ENCODE measurements at regions of chr2 and their contacts with region 1.

Region 1: DNA sequence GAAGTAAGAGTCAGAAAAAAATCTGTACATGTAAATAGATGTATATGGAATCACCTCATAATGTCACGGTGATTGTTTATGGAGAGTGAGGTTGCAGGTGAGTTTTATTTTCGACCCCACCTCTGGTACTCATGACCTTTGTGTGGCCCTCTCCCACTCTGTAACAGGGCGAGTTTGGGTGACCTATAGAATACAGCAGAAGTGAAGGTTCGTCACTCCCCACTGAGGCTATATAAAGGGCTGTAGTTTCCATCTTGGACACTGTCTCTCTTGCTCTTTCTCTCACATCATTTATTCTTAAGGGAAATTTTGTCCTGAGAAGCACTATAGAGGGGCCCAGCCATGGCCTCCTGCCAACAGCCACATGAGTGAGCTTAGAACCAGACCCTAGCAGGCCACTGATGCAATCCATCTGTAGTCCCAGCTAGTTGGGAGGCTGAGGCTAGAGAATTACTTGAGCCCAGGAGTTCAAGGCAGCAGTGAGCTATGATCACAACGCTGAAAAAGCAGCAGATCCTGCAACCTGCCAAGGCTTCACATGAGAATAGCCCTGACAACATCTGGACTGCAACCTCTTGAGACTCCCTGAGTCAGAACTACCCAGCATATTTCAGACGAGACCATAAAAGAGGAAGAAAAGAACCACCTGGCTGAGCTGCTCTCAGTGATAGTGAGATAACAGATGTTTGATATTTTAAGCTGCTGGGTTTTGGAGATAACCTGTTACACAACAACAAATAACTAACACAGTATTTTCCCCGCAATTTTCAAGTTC is 74.3 kb upstream of the SLC1A4 start:
- DNase-seq: no peak
- ATAC-seq: no peak

Region 2: GRCh38 chr2:64586883-64587481 is 327.9 kb before region 1 on chr2:
- intact Hi-C with region 1: no loop called
- DNase-seq: no peak
- ATAC-seq: peak; percentile 74

Region 3: GRCh38 chr2:65040400-65041261 is 125.7 kb after region 1 on chr2:
- intact Hi-C with region 1: loop called (anchors 5 kb)
- DNase-seq: peak; percentile 82 to 89
- ATAC-seq: peak; percentile 97

Measured in left colon (tissue), 2 donors.